ENCODE measurements at regions of chr11 and their contacts with region 1.

Region 1: DNA sequence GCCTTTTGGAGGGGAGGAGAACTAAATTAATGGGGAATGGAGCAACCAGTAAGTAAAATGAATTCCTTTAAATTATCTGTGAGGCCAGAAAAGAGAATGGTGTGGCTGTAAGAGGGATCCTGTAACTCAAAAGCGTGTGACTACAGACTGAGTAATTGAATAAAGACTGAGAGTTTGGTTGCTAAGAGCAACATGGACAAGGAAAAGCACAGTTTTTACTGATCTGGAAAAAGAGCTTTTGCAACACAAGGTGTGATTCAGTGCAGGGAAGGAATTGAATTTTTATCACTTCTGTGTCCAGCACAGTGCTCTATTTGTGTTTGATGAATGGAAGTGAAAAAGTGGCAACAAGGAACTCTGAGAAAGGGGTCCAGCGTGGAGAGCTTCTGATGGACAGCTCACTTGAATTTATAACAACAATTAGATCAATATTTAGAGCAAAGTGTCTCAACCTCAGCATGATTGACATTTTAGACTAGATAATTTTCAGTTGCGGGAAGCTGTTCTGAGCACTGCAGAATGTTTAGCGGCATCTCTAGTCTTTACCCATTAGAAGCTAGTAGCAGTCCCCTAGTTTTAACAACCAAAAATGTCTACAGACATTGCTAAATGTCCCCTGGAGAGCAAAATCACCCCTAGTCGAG is 202.8 kb upstream of the BDNF start:
- DNase-seq: no peak
- ATAC-seq: no peak
- H3K4me3 ChIP-seq: no peak overlapping the region
- H3K27ac ChIP-seq: no peak overlapping the region
- H3K4me1 ChIP-seq: no peaks in the 10 kb centered on the region
- H3K27me3 ChIP-seq: no peaks in the 10 kb centered on the region; a peak in 1 of 4 replicates
- CTCF ChIP-seq: no peak
- EP300 ChIP-seq: no peak
- POLR2A ChIP-seq: no peak
- RAD21 ChIP-seq: no peak

Region 2: DNA sequence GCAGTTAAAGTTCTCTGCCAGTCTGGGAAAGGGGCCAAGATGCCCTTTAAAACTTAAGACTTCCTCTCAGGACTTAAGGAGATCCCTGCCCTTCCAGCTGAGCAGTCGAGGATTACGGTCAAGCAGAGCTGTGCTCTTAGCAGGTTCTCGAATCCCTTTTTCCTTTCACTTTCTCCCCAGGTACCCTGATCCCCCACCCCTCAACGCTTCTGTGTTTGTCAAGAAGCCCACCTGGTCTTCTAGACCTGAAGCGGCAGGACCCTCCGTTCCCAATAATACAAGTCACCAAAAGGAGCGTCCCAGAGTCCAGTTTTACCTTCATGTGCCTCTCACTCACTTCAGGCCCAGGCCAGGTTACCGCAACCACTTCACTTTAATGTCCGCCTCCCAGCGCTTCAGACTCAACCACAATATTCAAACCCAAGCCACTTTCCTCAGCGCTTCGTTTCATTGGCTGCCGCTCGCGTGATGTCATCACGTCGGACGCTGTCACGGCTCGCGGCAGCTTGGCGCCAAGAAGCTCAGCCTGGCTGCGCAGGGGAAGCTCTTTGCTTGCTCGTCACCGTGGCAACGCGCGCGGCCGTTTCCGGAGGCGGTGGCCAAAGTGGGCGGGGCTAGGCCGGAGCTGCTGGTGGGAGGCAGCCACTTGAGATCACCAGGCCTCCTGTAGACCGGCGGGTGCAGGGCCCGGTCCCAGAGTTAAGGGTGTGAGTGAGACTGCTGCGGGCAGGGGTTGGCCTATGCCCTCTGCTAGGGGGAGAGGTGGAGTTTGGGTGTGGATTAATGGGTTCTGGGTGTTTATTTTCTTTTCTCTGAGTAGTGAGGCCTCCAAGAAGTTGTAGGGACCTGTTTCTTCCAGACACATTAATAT is 204.9 kb after region 1 on chr11 and contains the starts of genes KIF18A and METTL15:
- CTCF ChIA-PET with region 1: no interaction called
- POLR2A ChIA-PET with region 1: no interaction called
- RAD21 ChIA-PET with region 1: no interaction called
- SMC1A ChIA-PET with region 1: no interaction called
- in situ Hi-C with region 1: no loop called
- intact Hi-C with region 1: loop called (anchors 5 kb)
- DNase-seq: peak; percentile 96
- ATAC-seq: peak; percentile 91
- H3K4me3 ChIP-seq: peak within 1 kb of the TSS; percentile 86
- H3K27ac ChIP-seq: peak within 1 kb of the TSS; percentile 84
- H3K4me1 ChIP-seq: peaks cover 6% of the 10 kb centered on the region
- H3K27me3 ChIP-seq: no peaks in the 10 kb centered on the region
- CTCF ChIP-seq: no peak
- EP300 ChIP-seq: peak in 1 of 2 experiments; percentile 5; a peak in 1 of 4 replicates
- POLR2A ChIP-seq: peak; percentile 92
- RAD21 ChIP-seq: no peak
- polyA plus RNA-seq, gene KIF18A: 11.5 to 14.9 TPM
- polyA plus RNA-seq, gene METTL15: 10.5 to 15.1 TPM

Measured in GM12878 (cell line).